SK-N-SH (cell line): ENCODE measurements at regions of chr13 and their contacts with region 1.

Region 1: DNA sequence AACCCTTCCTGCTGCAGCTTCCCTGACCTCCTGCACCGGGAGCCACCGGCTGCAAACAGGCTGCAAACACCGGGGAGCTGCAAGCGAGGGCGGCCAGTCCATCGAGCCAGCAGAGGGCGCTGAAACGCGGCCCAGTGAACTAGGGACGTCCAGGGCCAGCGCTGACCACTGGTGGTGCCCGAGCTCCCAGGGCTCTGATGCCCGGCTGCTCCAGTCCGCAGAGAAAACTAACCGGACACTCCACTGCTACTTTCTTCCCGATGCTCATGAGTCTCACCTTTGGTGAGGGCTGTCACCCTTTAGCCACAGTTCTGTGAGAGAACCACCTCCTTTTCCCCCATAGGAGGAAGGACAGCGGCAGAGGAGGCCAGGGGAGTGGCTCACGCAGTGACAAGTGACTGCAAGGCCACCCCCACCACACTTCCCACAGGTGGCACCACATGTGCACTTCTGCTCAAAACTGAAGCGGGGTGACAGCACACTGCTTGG is 82.8 kb upstream of the MTIF3 start:
- DNase-seq: peak; percentile 85
- H3K4me3 ChIP-seq: peak overlapping the region; percentile 42 to 46
- H3K27ac ChIP-seq: no peak overlapping the region
- H3K4me1 ChIP-seq: peaks cover 0 to 3% of the 10 kb centered on the region in 2 experiments; a peak in 1 of 4 replicates
- H3K27me3 ChIP-seq: peaks cover 7% of the 10 kb centered on the region; the same call in 1 of the 2 replicates
- CTCF ChIP-seq: peak; percentile 93
- EP300 ChIP-seq: no peak
- RAD21 ChIP-seq: peak; percentile 82

Region 2: DNA sequence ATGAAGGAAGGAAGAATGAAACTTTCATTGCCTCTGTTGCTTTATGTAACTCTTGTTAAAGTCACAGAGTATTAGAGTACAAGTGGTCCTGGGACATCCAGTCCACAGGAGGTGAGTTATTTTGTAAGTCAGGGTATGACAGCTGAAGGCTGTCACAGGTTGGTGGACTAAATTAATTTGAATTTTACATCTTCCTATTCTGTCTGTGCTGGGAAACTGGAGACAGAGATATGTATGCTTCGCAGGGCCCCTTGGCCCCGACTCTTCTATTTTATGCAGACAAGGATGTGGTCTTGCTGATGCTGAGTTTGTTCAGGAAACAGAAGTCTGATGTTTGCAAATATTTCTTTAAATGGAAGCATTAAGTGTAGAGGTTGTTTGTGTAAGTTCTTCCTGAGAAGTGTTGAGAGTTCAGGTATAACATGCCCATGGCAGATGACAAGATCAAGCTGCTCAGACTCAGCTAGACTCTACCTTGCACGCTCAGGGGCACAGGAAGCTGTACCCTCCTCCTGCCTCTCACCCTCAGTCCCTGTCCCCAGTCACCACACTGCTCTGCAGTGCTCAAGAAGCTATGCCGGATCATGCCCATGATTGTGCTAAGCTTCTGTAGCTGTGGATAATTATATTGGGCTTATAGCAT is 239.2 kb before region 1 on chr13:
- CTCF ChIA-PET with region 1: no interaction called
- POLR2A ChIA-PET with region 1: no interaction called
- DNase-seq: no peak
- H3K4me3 ChIP-seq: no peak overlapping the region
- H3K27ac ChIP-seq: no peak overlapping the region
- H3K4me1 ChIP-seq: no peaks in the 10 kb centered on the region
- H3K27me3 ChIP-seq: peaks cover 54% of the 10 kb centered on the region
- CTCF ChIP-seq: no peak
- EP300 ChIP-seq: no peak
- RAD21 ChIP-seq: no peak

Region 3: GRCh38 chr13:27504128-27504867 is 28.9 kb before region 1 on chr13:
- CTCF ChIA-PET with region 1: interaction called, 10 read pairs
- POLR2A ChIA-PET with region 1: no interaction called
- DNase-seq: no peak
- H3K4me3 ChIP-seq: no peak overlapping the region
- H3K27ac ChIP-seq: no peak overlapping the region
- H3K4me1 ChIP-seq: no peaks in the 10 kb centered on the region; a peak in 1 of 4 replicates
- H3K27me3 ChIP-seq: peaks cover 48% of the 10 kb centered on the region; the same call in 1 of the 2 replicates
- CTCF ChIP-seq: no peak
- EP300 ChIP-seq: no peak
- RAD21 ChIP-seq: no peak

Region 4: GRCh38 chr13:27556109-27556508 is 22.9 kb after region 1 on chr13:
- CTCF ChIA-PET with region 1: interaction called, 22 read pairs
- POLR2A ChIA-PET with region 1: no interaction called
- DNase-seq: no peak
- H3K4me3 ChIP-seq: no peak overlapping the region
- H3K27ac ChIP-seq: no peak overlapping the region
- H3K4me1 ChIP-seq: peaks cover 0 to 9% of the 10 kb centered on the region in 2 experiments; a peak in 2 of 4 replicates
- H3K27me3 ChIP-seq: no peaks in the 10 kb centered on the region
- CTCF ChIP-seq: peak; percentile 63
- EP300 ChIP-seq: no peak
- RAD21 ChIP-seq: peak; percentile 48

Region 5: DNA sequence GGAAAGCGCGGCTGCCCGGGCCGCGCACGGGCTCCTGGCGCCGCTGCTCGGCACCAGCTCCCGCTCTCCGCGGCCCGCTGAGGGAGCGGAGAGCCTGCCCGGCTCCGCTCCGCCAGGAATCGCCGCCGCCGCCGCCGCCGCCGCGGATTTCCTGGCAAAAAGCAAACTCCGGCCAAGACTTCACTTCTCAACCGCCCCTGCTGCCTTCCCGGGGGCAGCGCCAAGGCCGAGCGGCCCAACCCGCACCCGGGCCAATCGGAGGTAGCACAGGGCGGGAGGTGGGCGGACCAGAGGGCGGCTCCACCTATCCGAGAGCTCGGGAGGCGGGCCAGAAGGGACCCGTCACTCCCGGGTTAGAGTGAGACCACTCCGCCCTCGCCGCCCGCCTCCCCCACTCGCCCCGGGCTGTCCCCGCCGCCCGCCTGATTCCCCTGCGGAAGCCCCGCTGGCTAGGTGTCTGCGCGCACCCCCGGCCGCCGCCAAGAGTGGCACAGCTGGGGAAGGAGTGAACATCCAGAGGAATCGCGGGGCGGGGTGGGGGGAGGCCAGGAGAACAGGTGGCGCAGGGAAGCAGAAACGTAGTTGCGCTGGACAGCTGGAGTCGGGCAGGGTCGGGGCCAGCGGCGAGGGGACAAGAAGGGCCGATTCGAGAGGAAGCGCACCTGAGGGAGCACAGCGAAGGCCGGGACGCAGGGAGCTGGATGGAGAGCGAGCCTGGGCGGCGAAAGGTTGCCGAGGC is 87.3 kb after region 1 on chr13 and contains the start of gene LNX2:
- CTCF ChIA-PET with region 1: interaction called, 19 read pairs
- POLR2A ChIA-PET with region 1: no interaction called
- DNase-seq: peak; percentile 98
- H3K4me3 ChIP-seq: peak within 1 kb of the TSS; percentile 81 to 85
- H3K27ac ChIP-seq: peak within 1 kb of the TSS; percentile 76 to 87
- H3K4me1 ChIP-seq: peaks cover 7 to 9% of the 10 kb centered on the region in 2 experiments; a peak in 3 of 4 replicates
- H3K27me3 ChIP-seq: no peaks in the 10 kb centered on the region
- CTCF ChIP-seq: no peak
- EP300 ChIP-seq: peak in 1 of 2 experiments; percentile 53; a peak in 1 of 4 replicates
- RAD21 ChIP-seq: no peak
- polyA plus RNA-seq, gene LNX2: 3.7 and 4.6 TPM in 2 replicates

Region 6: DNA sequence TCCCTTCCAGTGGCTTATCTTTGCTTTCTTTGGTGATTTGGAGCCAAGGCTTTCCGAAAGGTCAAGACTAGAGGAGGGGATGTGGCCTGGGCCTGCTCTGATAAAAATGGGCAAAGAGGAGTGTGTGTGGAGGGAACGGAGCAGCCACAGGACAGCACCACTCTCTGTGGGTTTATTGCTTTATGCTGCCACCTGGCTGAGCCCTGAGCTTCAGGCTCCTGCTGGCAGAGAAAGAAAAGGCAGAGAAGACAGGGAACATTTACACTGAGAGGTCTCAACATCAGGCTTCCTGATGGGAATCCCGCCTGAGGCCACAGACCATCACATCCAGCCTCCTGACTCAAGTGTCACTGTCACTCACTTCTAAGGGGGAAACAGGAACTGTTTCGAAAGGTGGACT is 249.9 kb after region 1 on chr13:
- CTCF ChIA-PET with region 1: interaction called, 25 read pairs
- POLR2A ChIA-PET with region 1: no interaction called
- DNase-seq: no peak
- H3K4me3 ChIP-seq: no peak overlapping the region
- H3K27ac ChIP-seq: no peak overlapping the region
- H3K4me1 ChIP-seq: no peaks in the 10 kb centered on the region
- H3K27me3 ChIP-seq: peaks cover 40% of the 10 kb centered on the region; the same call in 1 of the 2 replicates
- CTCF ChIP-seq: peak; percentile 25
- EP300 ChIP-seq: no peak
- RAD21 ChIP-seq: peak; percentile 66

Region 7: GRCh38 chr13:27797228-27797624 is 264.0 kb after region 1 on chr13:
- CTCF ChIA-PET with region 1: interaction called, 11 read pairs
- POLR2A ChIA-PET with region 1: no interaction called
- DNase-seq: no peak
- H3K4me3 ChIP-seq: no peak overlapping the region; a peak in 1 of 4 replicates
- H3K27ac ChIP-seq: no peak overlapping the region
- H3K4me1 ChIP-seq: no peaks in the 10 kb centered on the region
- H3K27me3 ChIP-seq: peaks cover 75% of the 10 kb centered on the region
- CTCF ChIP-seq: peak; percentile 22; the same call in 1 of the 2 replicates
- EP300 ChIP-seq: no peak
- RAD21 ChIP-seq: no peak

Region 8: DNA sequence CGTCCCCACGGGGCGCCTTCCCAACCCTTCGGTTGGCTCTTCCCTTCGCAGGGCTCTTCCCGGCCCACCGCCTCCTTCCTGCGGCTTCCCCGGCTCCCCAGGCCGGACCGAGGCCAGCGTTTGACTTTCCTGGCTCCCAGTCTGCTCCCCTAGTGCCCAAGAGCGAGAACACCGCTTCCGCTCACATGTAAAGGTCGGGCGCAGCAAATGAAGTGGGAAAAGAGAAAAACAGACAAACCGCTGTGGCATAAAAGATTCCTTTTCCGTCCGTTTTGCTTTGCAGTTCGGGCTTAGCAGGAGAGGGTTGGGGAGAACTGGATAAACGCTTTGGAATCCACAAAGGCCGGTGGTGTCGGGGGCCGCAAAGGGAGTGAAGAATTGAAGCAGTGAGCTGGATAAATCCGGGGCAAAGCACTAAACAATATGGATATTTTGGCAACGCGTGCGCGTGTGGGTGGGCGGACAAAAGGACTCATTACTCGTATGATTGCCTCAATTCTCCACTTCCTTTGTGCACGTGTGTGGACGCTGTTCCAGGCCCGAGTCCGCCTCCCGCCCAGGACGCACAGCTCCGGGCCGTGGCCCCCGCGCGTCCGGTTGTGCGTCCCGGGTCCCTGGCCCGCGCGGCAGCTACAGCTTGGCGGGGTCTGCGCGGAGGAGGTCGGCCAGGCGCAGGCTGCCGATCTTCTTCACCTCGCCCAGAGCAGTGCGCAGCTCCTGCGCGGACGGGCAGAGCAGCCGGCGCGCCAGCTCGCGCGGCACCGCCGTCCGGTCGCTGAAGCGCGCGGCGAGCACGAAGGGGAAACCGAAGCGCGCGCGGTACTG is 444.5 kb after region 1 on chr13:
- CTCF ChIA-PET with region 1: no interaction called
- POLR2A ChIA-PET with region 1: no interaction called
- DNase-seq: no peak
- H3K4me3 ChIP-seq: no peak overlapping the region
- H3K27ac ChIP-seq: no peak overlapping the region
- H3K4me1 ChIP-seq: no peaks in the 10 kb centered on the region
- H3K27me3 ChIP-seq: peaks cover 98% of the 10 kb centered on the region
- CTCF ChIP-seq: no peak
- EP300 ChIP-seq: no peak
- RAD21 ChIP-seq: no peak